H1 (cell line): ENCODE measurements at regions of chr3 and their contacts with region 1.

Region 1: GRCh38 chr3:46208167-46208704 is at the start of gene CCR1:
- DNase-seq: peak; percentile 17 to 54
- H3K4me3 ChIP-seq: no peak within 1 kb of the TSS
- H3K27ac ChIP-seq: no peak within 1 kb of the TSS
- H3K4me1 ChIP-seq: peaks cover 0 to 2% (median 0%) of the 10 kb centered on the region in 4 experiments; a peak in 2 of 7 replicates
- H3K27me3 ChIP-seq: no peaks in the 10 kb centered on the region
- CTCF ChIP-seq: peak; percentile 65 to 83 (median 74)
- EP300 ChIP-seq: no peak
- POLR2A ChIP-seq: no peak
- RAD21 ChIP-seq: peak; percentile 72 to 77
- total RNA-seq, gene CCR1: not detected in 2 replicates

Region 2: GRCh38 chr3:45948311-45948781 is 259.9 kb before region 1 on chr3:
- CTCF ChIA-PET with region 1: no interaction called
- POLR2A ChIA-PET with region 1: no interaction called
- DNase-seq: no peak
- H3K4me3 ChIP-seq: no peak overlapping the region
- H3K27ac ChIP-seq: no peak overlapping the region
- H3K4me1 ChIP-seq: no peaks in the 10 kb centered on the region
- H3K27me3 ChIP-seq: no peaks in the 10 kb centered on the region
- CTCF ChIP-seq: no peak
- EP300 ChIP-seq: no peak
- POLR2A ChIP-seq: no peak
- RAD21 ChIP-seq: no peak

Region 3: GRCh38 chr3:45986303-45986982 is 221.8 kb before region 1 on chr3:
- CTCF ChIA-PET with region 1: no interaction called
- POLR2A ChIA-PET with region 1: no interaction called
- DNase-seq: no peak
- H3K4me3 ChIP-seq: no peak overlapping the region
- H3K27ac ChIP-seq: no peak overlapping the region
- H3K4me1 ChIP-seq: peaks cover 0 to 4% (median 2%) of the 10 kb centered on the region in 4 experiments; a peak in 3 of 7 replicates
- H3K27me3 ChIP-seq: no peaks in the 10 kb centered on the region
- CTCF ChIP-seq: no peak
- EP300 ChIP-seq: no peak
- POLR2A ChIP-seq: no peak
- RAD21 ChIP-seq: no peak

Region 4: GRCh38 chr3:46065294-46065721 is 142.9 kb before region 1 on chr3:
- CTCF ChIA-PET with region 1: interaction called, 15 read pairs
- POLR2A ChIA-PET with region 1: no interaction called
- DNase-seq: no peak
- H3K4me3 ChIP-seq: no peak overlapping the region
- H3K27ac ChIP-seq: no peak overlapping the region
- H3K4me1 ChIP-seq: peaks cover 2 to 5% (median 3%) of the 10 kb centered on the region in 4 experiments; a peak in 3 of 7 replicates
- H3K27me3 ChIP-seq: no peaks in the 10 kb centered on the region
- CTCF ChIP-seq: no peak
- EP300 ChIP-seq: no peak
- POLR2A ChIP-seq: no peak
- RAD21 ChIP-seq: no peak

Region 5: DNA sequence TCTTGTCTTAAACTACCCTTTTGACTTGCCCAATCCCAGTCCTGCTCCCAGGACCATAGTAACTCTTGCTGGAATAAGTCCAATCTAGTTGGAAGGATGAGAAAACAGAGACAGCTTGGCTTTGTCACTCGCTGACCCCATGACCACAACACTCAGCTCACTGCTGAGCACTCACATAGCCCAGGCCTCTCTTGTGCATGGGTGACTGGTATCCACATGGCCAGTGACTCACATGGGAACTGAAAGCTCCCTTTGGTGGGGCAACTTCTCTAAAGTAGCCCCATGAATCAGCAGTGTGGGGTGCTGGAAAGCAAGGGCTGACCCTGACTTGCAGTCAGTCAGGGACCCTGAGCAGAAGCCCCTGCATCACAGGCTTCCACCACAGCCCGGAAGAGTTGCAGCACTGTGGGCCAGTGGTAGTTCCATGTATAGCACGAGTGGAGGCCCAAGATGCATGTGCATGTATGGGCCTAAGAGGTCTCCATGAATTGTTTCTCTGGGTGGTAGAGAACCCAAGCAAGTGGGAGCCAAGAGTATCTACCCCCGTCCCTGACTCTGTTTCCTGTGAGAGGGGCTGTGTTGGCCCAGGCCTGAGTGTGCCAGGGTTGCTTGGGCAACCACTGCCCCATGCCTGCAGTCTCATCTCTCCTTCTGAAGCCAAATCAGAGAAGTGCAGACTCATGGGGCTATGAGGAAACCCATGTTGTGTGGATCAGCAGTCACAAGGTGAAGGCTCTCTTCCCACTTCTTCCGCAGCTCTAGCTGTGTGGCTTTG is 118.8 kb before region 1 on chr3:
- CTCF ChIA-PET with region 1: interaction called, 34 read pairs
- POLR2A ChIA-PET with region 1: no interaction called
- DNase-seq: no peak
- H3K4me3 ChIP-seq: no peak overlapping the region
- H3K27ac ChIP-seq: no peak overlapping the region
- H3K4me1 ChIP-seq: no peaks in the 10 kb centered on the region
- H3K27me3 ChIP-seq: no peaks in the 10 kb centered on the region; a peak in 1 of 7 replicates
- CTCF ChIP-seq: no peak
- EP300 ChIP-seq: no peak
- POLR2A ChIP-seq: no peak
- RAD21 ChIP-seq: no peak

Region 6: GRCh38 chr3:46163318-46164041 is 44.8 kb before region 1 on chr3:
- CTCF ChIA-PET with region 1: interaction called, 13 read pairs
- POLR2A ChIA-PET with region 1: no interaction called
- DNase-seq: no peak
- H3K4me3 ChIP-seq: no peak overlapping the region
- H3K27ac ChIP-seq: no peak overlapping the region
- H3K4me1 ChIP-seq: peaks cover 0 to 2% (median 0%) of the 10 kb centered on the region in 4 experiments; a peak in 1 of 7 replicates
- H3K27me3 ChIP-seq: no peaks in the 10 kb centered on the region
- CTCF ChIP-seq: no peak
- EP300 ChIP-seq: no peak
- POLR2A ChIP-seq: no peak
- RAD21 ChIP-seq: no peak

Region 7: DNA sequence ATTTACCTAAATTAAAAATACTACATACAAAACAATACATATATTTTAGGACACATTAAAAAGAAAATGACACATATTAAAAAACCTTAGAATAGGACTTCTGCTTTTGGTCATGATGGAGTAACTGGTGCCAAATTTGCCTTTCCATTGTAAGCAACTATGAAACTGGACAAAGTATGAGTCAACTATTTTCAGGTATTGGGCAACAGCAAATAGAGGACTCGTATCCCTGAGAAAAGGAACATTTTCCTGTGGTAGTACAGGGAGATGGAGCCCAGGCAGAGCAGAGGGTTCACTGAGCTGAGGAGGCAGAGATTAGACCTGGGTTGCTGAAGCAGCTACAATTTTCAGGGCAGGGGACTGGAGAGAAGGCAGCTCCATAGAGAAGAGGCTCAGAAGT is 14.8 kb before region 1 on chr3:
- CTCF ChIA-PET with region 1: interaction called, 24 read pairs
- POLR2A ChIA-PET with region 1: no interaction called
- DNase-seq: no peak
- H3K4me3 ChIP-seq: no peak overlapping the region
- H3K27ac ChIP-seq: no peak overlapping the region
- H3K4me1 ChIP-seq: no peaks in the 10 kb centered on the region
- H3K27me3 ChIP-seq: no peaks in the 10 kb centered on the region
- CTCF ChIP-seq: no peak
- EP300 ChIP-seq: no peak
- POLR2A ChIP-seq: no peak
- RAD21 ChIP-seq: no peak

Region 8: DNA sequence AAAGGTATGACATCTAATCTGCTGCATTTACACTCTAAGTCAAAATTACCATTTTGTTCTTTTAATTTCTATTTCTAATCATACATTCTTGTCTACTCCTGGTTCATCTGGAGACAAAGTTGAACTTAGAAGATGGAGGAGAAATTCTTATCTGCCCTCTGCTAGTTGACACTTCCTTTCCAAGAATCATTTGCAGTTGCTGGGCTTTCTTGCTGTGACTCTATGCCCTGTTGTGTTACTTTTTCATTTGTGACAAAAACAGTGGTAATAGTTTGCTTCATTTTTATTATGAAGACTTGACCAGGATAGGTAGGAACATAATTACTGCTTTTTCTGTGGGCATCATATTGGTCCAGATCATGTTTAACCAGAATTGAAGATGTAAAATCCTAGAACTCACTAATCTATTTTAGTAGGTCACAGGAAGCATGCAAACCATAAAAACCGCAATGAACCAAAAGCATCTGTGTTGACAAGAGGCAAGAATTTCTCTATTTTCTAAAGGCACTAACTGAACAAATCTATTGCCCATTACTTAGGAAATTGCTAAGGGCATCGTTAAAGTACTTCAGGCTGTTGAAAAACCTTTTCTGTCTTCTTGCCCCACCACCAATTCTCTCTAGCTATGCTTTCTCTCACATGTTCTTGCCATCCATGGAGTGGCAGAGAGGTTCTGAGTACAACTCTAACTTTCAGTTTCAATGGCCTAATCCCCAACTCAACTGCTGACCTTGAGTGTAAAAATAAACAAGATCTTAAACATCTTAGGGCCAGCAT is 141.4 kb after region 1 on chr3:
- CTCF ChIA-PET with region 1: no interaction called
- POLR2A ChIA-PET with region 1: no interaction called
- DNase-seq: no peak
- H3K4me3 ChIP-seq: no peak overlapping the region
- H3K27ac ChIP-seq: no peak overlapping the region
- H3K4me1 ChIP-seq: no peaks in the 10 kb centered on the region; a peak in 1 of 7 replicates
- H3K27me3 ChIP-seq: no peaks in the 10 kb centered on the region
- CTCF ChIP-seq: no peak
- EP300 ChIP-seq: no peak
- POLR2A ChIP-seq: no peak
- RAD21 ChIP-seq: no peak

Region 9: GRCh38 chr3:46368569-46368968 is 160.3 kb after region 1 on chr3:
- CTCF ChIA-PET with region 1: interaction called, 164 read pairs
- POLR2A ChIA-PET with region 1: no interaction called
- DNase-seq: peak; percentile 43 to 60
- H3K4me3 ChIP-seq: no peak overlapping the region
- H3K27ac ChIP-seq: no peak overlapping the region
- H3K4me1 ChIP-seq: no peaks in the 10 kb centered on the region
- H3K27me3 ChIP-seq: peaks cover 0 to 5% (median 0%) of the 10 kb centered on the region in 4 experiments; a peak in 1 of 7 replicates
- CTCF ChIP-seq: peak; percentile 77 to 78 (median 77)
- EP300 ChIP-seq: no peak
- POLR2A ChIP-seq: no peak
- RAD21 ChIP-seq: peak; percentile 89 to 90

Region 10: GRCh38 chr3:46378426-46378942 is 170.2 kb after region 1 on chr3:
- CTCF ChIA-PET with region 1: interaction called, 164 read pairs
- POLR2A ChIA-PET with region 1: no interaction called
- DNase-seq: peak; percentile 38 to 83
- H3K4me3 ChIP-seq: no peak overlapping the region
- H3K27ac ChIP-seq: no peak overlapping the region
- H3K4me1 ChIP-seq: peaks cover 1 to 15% (median 8%) of the 10 kb centered on the region in 4 experiments; a peak in 6 of 7 replicates
- H3K27me3 ChIP-seq: no peaks in the 10 kb centered on the region
- CTCF ChIP-seq: peak; percentile 80 to 85 (median 81)
- EP300 ChIP-seq: no peak
- POLR2A ChIP-seq: no peak
- RAD21 ChIP-seq: peak; percentile 90 to 93